ENCODE measurements at regions of chr1 and their contacts with region 1.

Region 1: DNA sequence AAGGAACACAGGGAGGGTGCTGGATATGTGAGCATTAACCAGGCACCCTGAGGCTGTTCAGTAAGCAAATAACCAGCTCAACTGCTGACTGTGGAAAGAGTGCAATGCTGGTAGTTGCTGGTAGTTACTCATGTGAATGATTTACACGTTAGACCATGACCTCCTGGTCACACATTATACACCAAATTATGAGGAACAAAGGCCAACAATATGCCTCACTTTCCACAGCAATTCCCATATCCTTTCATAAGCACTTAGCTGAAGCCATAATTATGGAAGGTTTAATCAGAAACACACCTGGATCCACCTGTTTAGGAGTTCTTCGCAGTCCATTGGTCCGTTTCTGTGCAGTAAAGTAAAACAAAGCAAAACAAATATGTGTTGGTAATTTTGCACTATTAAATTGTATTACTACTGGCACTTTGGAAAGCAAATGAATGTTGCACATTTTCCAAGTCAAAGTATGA is 281.8 kb downstream of the VAV3 start:
- DNase-seq: peak; percentile 60
- H3K4me3 ChIP-seq: no peak overlapping the region
- H3K27ac ChIP-seq: peak overlapping the region; percentile 55
- H3K4me1 ChIP-seq: peaks cover 16% of the 10 kb centered on the region
- H3K27me3 ChIP-seq: no peaks in the 10 kb centered on the region
- CTCF ChIP-seq: no peak

Region 2: GRCh38 chr1:107535091-107535490 is 148.1 kb before region 1 on chr1:
- CTCF ChIA-PET with region 1: no interaction called
- dilution Hi-C with region 1: no loop called
- in situ Hi-C with region 1: no loop called
- intact Hi-C with region 1: loop called (anchors 5 kb)
- DNase-seq: no peak
- H3K4me3 ChIP-seq: no peak overlapping the region
- H3K27ac ChIP-seq: peak overlapping the region; percentile 90
- H3K4me1 ChIP-seq: peaks cover 72% of the 10 kb centered on the region
- H3K27me3 ChIP-seq: no peaks in the 10 kb centered on the region
- CTCF ChIP-seq: no peak

Region 3: GRCh38 chr1:107572653-107573211 is 110.5 kb before region 1 on chr1:
- CTCF ChIA-PET with region 1: no interaction called
- dilution Hi-C with region 1: no loop called
- in situ Hi-C with region 1: no loop called
- intact Hi-C with region 1: no loop called
- DNase-seq: peak; percentile 93
- H3K4me3 ChIP-seq: peak overlapping the region in 2 of 3 experiments; percentile 1 to 4
- H3K27ac ChIP-seq: no peak overlapping the region
- H3K4me1 ChIP-seq: peaks cover 20% of the 10 kb centered on the region
- H3K27me3 ChIP-seq: no peaks in the 10 kb centered on the region
- CTCF ChIP-seq: no peak